Activated B cell treated with CpG ODN at 0.5 μM for 24 hours (primary cell): ENCODE measurements at regions of chr11 and their contacts with region 1.

Region 1: DNA sequence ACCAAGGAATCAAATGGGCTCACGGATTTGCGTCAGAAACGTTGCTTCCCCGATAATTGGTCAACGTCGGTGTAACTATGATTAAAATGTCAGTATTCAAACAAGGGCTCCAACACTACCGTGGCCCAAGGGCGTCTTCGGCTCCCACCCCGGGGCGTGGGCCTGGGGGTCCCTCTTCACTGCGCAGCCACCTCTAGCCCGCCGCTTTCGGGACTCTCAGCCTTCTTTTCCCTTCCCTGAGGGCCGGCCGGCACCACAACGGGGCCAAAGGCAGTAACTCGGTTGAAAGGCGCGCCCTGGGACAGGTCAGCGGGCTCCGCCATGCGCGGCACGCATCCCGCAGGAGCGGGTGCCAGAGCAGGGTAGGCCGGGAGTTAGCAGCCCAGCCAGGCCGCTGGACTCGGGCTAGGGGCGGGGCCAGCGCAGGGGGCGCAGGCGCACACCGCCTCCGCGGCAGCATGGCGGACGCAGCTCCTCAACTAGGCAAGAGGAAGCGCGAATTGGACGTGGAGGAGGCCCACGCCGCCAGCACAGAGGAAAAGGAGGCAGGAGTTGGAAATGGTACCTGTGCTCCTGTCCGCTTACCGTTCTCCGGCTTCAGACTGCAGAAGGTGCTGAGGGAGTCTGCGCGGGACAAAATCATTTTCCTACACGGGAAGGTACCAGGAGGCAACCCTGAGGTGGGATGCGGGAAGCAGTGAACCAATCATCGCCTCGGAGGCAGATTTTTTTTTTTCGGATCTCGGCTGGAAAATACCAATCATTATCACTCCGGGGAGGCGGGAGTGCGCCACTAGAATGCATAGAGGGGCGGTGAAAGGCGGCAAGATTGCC is at the start of gene DCPS:
- DNase-seq: peak; percentile 92
- ATAC-seq: peak; percentile 98
- H3K4me3 Mint-ChIP-seq: peak within 1 kb of the TSS; percentile 93
- H3K27ac Mint-ChIP-seq: peak within 1 kb of the TSS; percentile 92
- H3K4me1 Mint-ChIP-seq: peaks cover 38% of the 10 kb centered on the region
- H3K27me3 Mint-ChIP-seq: no peaks in the 10 kb centered on the region
- CTCF ChIP-seq: no peak
- total RNA-seq, gene DCPS: 37.6 and 39.6 TPM in 2 replicates

Region 2: DNA sequence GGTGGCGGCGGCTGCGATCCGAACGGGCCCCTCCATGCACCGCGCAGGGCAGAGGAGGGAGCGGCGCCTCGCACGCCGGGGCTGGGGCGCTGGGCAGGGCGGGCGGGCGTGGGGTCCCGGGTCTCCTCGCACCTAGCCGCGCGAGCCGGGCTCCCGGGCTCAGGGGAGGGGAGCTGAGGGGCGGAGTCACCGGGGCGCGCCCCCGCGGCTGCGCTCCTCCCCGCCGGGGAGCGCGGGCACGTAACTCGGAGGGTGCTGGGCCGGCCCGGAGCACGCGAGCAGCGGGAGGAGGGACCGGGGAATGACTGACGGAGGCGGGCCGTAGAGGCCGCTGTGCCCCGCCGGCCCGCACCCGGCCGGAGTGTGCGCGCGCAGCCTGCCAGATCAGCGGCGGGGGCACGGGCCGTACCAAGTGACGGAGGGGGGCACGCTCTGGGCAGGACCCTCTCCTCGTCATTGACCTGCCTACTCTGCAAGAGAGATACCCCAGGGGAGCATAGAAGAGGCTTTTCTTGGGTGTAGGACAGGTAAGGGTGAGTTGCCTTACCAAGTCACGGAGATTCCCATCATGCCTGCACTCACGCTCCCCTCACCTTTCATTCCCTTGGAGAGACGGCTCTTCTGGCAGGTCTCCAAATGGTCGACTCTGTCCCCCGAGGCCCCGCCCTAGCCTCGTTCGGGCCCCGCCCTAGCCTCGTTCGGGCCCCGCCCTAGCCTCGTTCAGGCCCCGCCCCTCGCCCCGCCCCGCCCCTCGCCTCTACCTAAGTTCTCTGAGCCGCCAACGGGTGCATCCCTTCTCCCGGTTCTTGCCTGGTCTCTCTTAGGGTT is 240.9 kb before region 1 on chr11 and contains the start of gene CDON:
- CTCF ChIA-PET with region 1: no interaction called
- POLR2A ChIA-PET with region 1: interaction called, 5 read pairs
- intact Hi-C with region 1: loop called (anchors 10 kb)
- DNase-seq: peak; percentile 72
- ATAC-seq: peak; percentile 90
- H3K4me3 Mint-ChIP-seq: peak within 1 kb of the TSS; percentile 81
- H3K27ac Mint-ChIP-seq: no peak within 1 kb of the TSS
- H3K4me1 Mint-ChIP-seq: peaks cover 6% of the 10 kb centered on the region
- H3K27me3 Mint-ChIP-seq: peaks cover 38% of the 10 kb centered on the region
- CTCF ChIP-seq: no peak
- total RNA-seq, gene CDON: 0.24 and 0.27 TPM in 2 replicates

Region 3: DNA sequence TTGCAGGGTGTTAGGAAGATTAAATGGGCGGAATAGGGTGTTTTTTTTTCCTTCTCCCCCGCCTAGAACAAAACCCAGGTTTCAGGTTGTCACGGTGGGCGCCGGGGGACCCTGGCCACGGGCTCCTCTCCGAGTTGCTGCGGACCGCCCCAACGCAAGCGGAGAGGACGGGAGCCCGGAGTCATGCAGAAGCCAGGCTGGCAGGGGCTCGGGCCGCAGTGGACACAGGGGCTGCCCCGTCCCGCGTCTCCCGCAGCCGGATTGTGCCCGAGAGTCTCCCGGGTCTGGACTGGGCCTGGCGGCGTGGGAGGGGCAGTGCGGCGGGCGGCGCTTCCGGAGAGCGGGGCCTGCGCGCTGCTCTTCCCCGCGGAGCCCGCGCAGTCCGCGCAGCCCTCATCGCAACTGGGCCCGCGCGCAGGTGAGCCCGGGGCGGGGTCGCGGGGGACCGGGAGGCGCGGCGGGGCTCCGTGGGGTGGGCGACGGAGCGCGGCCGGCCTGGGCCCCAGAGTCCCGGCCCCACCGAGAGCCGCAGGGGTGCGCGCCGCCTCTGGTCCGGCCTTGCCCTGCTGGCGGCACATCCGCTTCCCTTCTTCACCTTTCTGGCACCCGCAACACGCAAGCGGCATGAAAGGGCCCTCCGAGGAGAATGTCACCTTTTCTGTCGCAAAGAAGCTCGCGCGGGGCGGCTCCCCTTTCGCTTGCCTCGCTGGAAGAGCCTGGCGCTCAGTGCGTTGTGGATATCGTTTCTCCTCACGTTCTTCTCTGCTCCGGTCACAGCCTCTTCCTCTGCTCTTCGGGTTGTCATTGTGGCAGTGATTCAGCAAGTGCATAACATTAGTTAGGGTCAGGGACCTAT is 20.9 kb before region 1 on chr11 and contains the start of gene TIRAP:
- CTCF ChIA-PET with region 1: no interaction called
- POLR2A ChIA-PET with region 1: interaction called, 24 read pairs
- intact Hi-C with region 1: loop called (anchors 1 kb)
- DNase-seq: peak; percentile 68
- ATAC-seq: peak; percentile 79
- H3K4me3 Mint-ChIP-seq: peak within 1 kb of the TSS; percentile 95
- H3K27ac Mint-ChIP-seq: peak within 1 kb of the TSS; percentile 93
- H3K4me1 Mint-ChIP-seq: peaks cover 40% of the 10 kb centered on the region
- H3K27me3 Mint-ChIP-seq: no peaks in the 10 kb centered on the region
- CTCF ChIP-seq: no peak
- total RNA-seq, gene TIRAP: 16.6 and 18.3 TPM in 2 replicates

Region 4: DNA sequence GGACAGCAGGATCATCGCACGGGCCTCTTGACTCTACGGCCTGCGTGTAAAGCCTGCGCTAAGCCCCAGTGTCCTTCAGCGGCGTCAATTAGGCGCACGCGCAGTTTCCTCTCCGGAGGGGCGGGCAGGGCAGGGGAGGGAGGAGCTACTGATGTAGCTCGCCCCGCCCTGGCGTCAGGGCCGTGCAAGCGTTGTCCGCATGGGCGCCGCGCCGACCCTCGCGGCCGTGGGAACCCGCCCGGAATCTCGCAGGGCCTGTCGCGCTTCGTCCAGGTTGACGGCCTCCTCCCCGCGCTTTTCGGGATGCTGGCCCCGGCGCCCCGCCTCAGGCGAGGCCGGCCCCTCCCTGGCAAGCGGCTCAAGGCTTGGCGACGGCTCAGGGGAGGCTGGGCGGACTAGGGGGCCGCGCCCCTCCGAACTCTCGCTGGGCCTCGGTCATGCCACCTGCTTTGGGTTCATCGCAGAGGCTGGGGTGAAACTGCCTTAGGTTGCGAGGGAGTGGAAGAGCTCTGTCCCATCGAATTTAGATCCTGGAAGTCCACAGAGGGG is 112.8 kb after region 1 on chr11:
- CTCF ChIA-PET with region 1: no interaction called
- POLR2A ChIA-PET with region 1: no interaction called
- intact Hi-C with region 1: loop called (anchors 2 kb)
- DNase-seq: peak; percentile 55
- ATAC-seq: peak; percentile 99
- H3K4me3 Mint-ChIP-seq: peak overlapping the region; percentile 67
- H3K27ac Mint-ChIP-seq: no peak overlapping the region
- H3K4me1 Mint-ChIP-seq: peaks cover 26% of the 10 kb centered on the region
- H3K27me3 Mint-ChIP-seq: no peaks in the 10 kb centered on the region
- CTCF ChIP-seq: no peak